ENCODE measurements at regions of chr1 and their contacts with region 1.

Region 1: DNA sequence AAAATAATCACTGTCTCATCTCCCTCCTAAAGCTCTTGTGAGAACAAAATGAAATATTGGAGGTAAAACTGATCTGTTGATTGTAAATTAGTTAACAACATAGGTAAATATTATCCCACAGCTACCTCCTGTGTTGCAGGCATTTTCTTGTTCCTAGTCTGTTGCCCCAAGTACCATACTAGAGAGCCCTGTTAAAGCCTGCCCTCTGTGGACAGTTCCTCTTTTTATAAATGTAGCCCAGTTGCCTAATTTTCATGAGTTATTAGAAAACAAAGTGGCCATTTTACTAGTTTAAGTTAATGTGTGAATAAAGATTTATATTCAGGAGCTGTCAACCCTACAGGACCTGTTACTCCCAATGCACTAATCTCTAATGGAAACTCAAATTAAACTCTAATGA is 180.0 kb upstream of the KCND3 start:
- DNase-seq: no peak
- H3K4me3 ChIP-seq: no peak overlapping the region
- H3K27ac ChIP-seq: no peak overlapping the region
- H3K4me1 ChIP-seq: no peaks in the 10 kb centered on the region
- H3K27me3 ChIP-seq: no peaks in the 10 kb centered on the region
- CTCF ChIP-seq: no peak
- POLR2A ChIP-seq: no peak

Region 2: GRCh38 chr1:112074711-112075110 is 94.8 kb before region 1 on chr1:
- intact Hi-C with region 1: loop called (anchors 10 kb)
- DNase-seq: no peak
- H3K4me3 ChIP-seq: no peak overlapping the region
- H3K27ac ChIP-seq: no peak overlapping the region
- H3K4me1 ChIP-seq: no peaks in the 10 kb centered on the region
- H3K27me3 ChIP-seq: no peaks in the 10 kb centered on the region
- CTCF ChIP-seq: no peak
- POLR2A ChIP-seq: no peak